ENCODE measurements at regions of chr5 and their contacts with region 1.

Region 1: GRCh38 chr5:142922223-142922952 is 152.2 kb downstream of the ARHGAP26 start:
- DNase-seq: peak; percentile 38 to 76
- ATAC-seq: peak; percentile 72 to 77
- H3K4me3 ChIP-seq: no peak overlapping the region
- H3K27ac ChIP-seq: peak overlapping the region; percentile 51 to 70
- H3K4me1 ChIP-seq: peaks cover 58% of the 10 kb centered on the region
- CTCF ChIP-seq: peak; percentile 75
- EP300 ChIP-seq: peak; percentile 49 to 67; a peak in 1 of 5 replicates
- POLR2A ChIP-seq: no peak
- RAD21 ChIP-seq: peak; percentile 80 to 88

Region 2: DNA sequence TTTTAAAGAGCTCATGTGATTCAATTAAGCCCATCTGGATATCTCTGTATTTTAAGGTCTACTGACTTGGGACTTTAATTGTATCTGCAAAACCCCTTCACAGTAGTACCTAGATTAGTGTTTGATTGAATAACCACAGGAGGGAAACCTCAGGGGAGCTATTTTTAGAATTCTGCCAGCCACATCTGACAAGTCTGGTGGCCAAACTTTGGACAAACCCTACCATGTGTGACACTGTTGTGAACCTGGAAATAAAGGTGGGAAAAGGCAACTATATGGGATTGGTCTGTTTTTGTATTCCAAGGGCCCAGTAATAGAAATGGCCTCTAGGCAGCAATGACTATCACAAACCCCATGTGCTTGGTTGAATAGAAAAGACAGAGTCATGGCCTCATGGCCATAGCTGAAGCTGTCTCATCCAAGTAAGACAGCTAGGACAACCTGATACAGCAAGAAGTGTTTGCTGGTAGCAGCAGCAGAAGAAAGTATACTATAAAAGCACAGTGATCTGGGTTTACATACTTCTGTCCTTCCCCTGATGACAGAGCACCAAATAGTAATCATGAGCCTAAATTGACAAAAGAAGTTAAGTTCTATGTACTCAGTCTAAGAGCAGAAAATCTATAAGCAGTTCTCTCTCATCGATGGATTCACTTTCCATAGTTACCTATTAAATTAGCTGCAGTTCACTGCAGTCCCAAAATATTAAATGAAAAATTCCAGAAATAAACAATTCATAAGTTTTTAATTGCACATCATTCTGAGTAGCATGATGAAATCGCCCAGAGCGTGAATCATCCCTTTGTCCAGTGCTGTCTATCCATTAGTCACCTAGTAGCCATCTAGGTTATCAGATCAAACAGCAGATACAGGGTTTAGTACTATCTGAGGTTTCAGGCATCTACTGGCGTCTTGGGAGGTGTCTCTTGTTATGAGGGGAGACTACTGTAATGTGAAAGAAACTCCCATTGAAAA is 37.6 kb after region 1 on chr5:
- CTCF ChIA-PET with region 1: interaction called, 19 read pairs
- POLR2A ChIA-PET with region 1: no interaction called
- DNase-seq: peak; percentile 49 to 85
- ATAC-seq: peak; percentile 92 to 93
- H3K4me3 ChIP-seq: 0 out of 3 replicates have a peak overlapping the region, but pooled peaks have one; percentile 2
- H3K27ac ChIP-seq: peak overlapping the region; percentile 88 to 96
- H3K4me1 ChIP-seq: peaks cover 64% of the 10 kb centered on the region
- CTCF ChIP-seq: no peak
- EP300 ChIP-seq: peak; percentile 23 to 63; a peak in 3 of 5 replicates
- POLR2A ChIP-seq: no peak
- RAD21 ChIP-seq: 0 out of 5 replicates have a peak, but pooled peaks of 1 of the 2 experiments have one; percentile 13

Region 3: GRCh38 chr5:143002459-143003328 is 80.3 kb after region 1 on chr5:
- CTCF ChIA-PET with region 1: interaction called, 18 read pairs
- POLR2A ChIA-PET with region 1: no interaction called
- DNase-seq: peak; percentile 55 to 57
- ATAC-seq: peak; percentile 75 to 86; a peak in 4 of 6 replicates
- H3K4me3 ChIP-seq: no peak overlapping the region
- H3K27ac ChIP-seq: peak overlapping the region; percentile 52 to 62
- H3K4me1 ChIP-seq: peaks cover 22% of the 10 kb centered on the region
- CTCF ChIP-seq: peak; percentile 56
- EP300 ChIP-seq: no peak
- POLR2A ChIP-seq: no peak
- RAD21 ChIP-seq: peak; percentile 77 to 83

Measured in A549 (cell line).